Activated CD4-positive, alpha-beta memory T cell treated with anti-CD3 and anti-CD28 coated beads for 36 hours (primary cell): ENCODE measurements at regions of chr17 and their contacts with region 1.

Region 1: DNA sequence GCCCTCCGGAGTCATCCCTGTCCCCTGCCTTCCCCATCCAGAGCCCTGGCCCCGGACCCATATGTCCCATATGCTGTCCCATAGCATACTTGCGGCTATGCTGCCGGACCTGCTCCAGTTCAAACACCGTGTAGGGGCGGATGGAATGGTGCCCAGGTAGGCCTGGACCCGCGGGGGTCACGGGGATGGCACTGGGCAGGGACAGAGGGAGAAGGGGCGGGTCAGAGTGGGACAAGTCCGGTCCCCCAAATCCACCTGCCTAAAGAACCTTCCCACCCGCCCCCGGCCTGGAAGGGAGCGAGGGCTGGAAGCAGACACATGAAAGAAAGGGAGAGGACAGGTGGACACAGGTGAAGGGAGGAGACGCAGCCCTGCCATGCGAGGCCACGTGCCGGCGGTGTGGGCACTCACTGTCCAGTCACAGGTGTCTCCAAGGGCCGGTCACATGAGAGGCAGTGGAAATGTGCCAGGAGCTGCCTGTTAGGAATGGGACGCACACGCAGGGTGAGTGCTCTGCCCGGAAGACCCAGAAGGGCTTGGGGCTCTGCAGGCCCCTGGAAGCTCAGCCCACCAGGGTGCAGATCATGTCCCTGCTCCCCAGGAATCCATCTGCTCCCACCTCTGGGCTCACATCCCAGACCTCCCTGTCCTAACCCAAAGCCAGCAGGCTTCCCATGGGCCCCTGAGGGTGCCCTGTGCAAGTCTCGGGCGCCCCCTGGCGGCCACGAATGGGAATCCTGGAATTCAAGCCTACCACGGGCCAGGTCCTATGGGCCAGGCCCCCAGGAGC is 14.0 kb downstream of the UBALD2 start:
- DNase-seq: peak; percentile 90
- H3K4me3 Mint-ChIP-seq: no peak overlapping the region
- H3K27ac Mint-ChIP-seq: no peak overlapping the region
- H3K4me1 Mint-ChIP-seq: peaks cover 14% of the 10 kb centered on the region
- H3K27me3 Mint-ChIP-seq: no peaks in the 10 kb centered on the region

Region 2: GRCh38 chr17:75904749-75905521 is 374.2 kb before region 1 on chr17 and contains the start of gene MRPL38:
- CTCF ChIA-PET with region 1: interaction called, 7 read pairs
- POLR2A ChIA-PET with region 1: no interaction called
- intact Hi-C with region 1: loop called (anchors 10 kb)
- DNase-seq: peak; percentile 97
- H3K4me3 Mint-ChIP-seq: peak within 1 kb of the TSS; percentile 99
- H3K27ac Mint-ChIP-seq: peak within 1 kb of the TSS; percentile 90
- H3K4me1 Mint-ChIP-seq: peaks cover 17% of the 10 kb centered on the region
- H3K27me3 Mint-ChIP-seq: no peaks in the 10 kb centered on the region
- total RNA-seq, gene MRPL38: 108 TPM

Region 3: GRCh38 chr17:76121932-76122430 is 157.2 kb before region 1 on chr17:
- CTCF ChIA-PET with region 1: interaction called, 337 read pairs
- POLR2A ChIA-PET with region 1: interaction called, 14 read pairs
- intact Hi-C with region 1: loop called (anchors 1 kb)
- DNase-seq: peak; percentile 35
- H3K4me3 Mint-ChIP-seq: no peak overlapping the region
- H3K27ac Mint-ChIP-seq: no peak overlapping the region
- H3K4me1 Mint-ChIP-seq: peaks cover 9% of the 10 kb centered on the region
- H3K27me3 Mint-ChIP-seq: no peaks in the 10 kb centered on the region

Region 4: GRCh38 chr17:76153640-76154039 is 125.5 kb before region 1 on chr17:
- CTCF ChIA-PET with region 1: interaction called, 10 read pairs
- POLR2A ChIA-PET with region 1: no interaction called
- intact Hi-C with region 1: no loop called
- DNase-seq: no peak
- H3K4me3 Mint-ChIP-seq: no peak overlapping the region
- H3K27ac Mint-ChIP-seq: no peak overlapping the region
- H3K4me1 Mint-ChIP-seq: peaks cover 26% of the 10 kb centered on the region
- H3K27me3 Mint-ChIP-seq: no peaks in the 10 kb centered on the region

Region 5: GRCh38 chr17:76191896-76192295 is 87.3 kb before region 1 on chr17:
- CTCF ChIA-PET with region 1: interaction called, 12 read pairs
- POLR2A ChIA-PET with region 1: interaction called, 298 read pairs
- intact Hi-C with region 1: no loop called
- DNase-seq: peak; percentile 55
- H3K4me3 Mint-ChIP-seq: peak overlapping the region; percentile 61
- H3K27ac Mint-ChIP-seq: peak overlapping the region; percentile 97
- H3K4me1 Mint-ChIP-seq: peaks cover 59% of the 10 kb centered on the region
- H3K27me3 Mint-ChIP-seq: no peaks in the 10 kb centered on the region

Region 6: DNA sequence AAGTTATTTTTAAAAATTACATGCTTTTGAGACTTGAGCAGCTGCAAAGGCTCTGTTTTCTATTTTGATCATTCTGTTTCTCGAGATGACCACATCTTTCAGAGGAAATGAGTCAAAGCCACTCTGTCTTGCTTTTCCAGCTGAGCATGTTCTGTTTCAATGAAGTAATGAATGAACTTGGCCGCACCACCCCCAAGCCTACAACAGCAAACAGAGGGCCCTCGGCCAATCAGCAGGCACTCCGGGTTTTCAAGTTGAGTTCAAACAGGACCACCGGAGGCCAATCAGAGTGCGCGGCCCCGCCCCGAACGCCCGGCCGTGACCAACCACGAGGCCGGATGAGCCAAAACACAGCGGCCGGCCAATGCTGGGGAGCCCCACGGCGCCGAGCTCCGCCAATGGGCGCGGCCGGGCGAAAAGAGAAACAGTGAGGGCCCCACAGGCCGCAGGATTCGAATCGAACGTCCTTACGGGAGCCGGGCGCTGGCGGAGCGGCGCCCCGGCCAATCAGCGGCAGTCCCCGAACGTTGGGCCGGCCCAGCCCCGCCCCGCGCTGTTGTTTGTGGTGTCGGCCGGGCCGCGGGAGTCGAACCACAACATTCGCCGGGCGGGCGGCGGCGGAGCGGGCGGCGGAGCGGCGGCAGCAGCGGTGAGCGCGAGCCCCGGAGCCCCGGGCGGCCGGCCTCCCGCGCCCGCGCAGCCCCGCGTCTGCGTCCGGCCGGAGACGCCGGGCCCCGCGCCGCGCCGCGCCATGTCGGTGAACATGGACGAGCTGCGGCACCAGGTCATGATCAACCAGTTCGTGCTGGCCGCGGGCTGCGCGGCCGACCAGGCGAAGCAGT is 14.2 kb before region 1 on chr17 and contains the start of gene UBALD2:
- CTCF ChIA-PET with region 1: interaction called, 31 read pairs
- POLR2A ChIA-PET with region 1: interaction called, 47 read pairs
- intact Hi-C with region 1: no loop called
- DNase-seq: peak; percentile 100
- H3K4me3 Mint-ChIP-seq: peak within 1 kb of the TSS; percentile 92
- H3K27ac Mint-ChIP-seq: peak within 1 kb of the TSS; percentile 97
- H3K4me1 Mint-ChIP-seq: peaks cover 48% of the 10 kb centered on the region
- H3K27me3 Mint-ChIP-seq: no peaks in the 10 kb centered on the region
- total RNA-seq, gene UBALD2: 317 TPM

Region 7: DNA sequence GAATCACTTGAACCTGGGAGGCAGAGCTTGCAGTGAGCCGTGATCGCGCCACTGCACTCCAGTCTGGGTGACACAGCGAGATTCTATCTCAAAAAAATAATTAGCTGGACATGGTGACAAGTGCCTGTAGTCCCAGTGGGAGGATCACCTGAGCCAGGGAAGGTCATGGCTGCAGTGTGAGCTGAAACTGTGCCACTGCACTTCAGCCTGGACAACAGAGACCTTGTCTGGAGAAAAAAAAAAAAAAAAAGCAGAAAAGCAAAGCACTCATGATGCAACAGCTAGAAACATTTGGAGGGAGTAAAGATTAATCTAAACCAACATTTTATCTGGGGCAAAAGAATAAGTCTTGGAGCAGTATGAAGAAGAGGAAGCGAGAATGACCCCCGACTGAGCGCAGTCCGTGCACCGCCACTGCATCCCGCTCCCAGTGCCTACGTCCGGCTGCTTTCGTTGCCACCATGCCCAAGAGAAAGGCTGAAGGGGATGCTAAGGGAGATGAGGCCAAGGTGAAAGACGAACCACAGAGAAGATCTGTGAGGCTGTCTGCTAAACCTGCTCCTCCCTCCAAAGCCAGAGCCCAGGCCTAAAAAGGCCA is 66.3 kb after region 1 on chr17:
- CTCF ChIA-PET with region 1: no interaction called
- POLR2A ChIA-PET with region 1: no interaction called
- intact Hi-C with region 1: no loop called
- DNase-seq: no peak
- H3K4me3 Mint-ChIP-seq: no peak overlapping the region
- H3K27ac Mint-ChIP-seq: no peak overlapping the region
- H3K4me1 Mint-ChIP-seq: no peaks in the 10 kb centered on the region
- H3K27me3 Mint-ChIP-seq: no peaks in the 10 kb centered on the region

Region 8: GRCh38 chr17:76384222-76384986 is 105.3 kb after region 1 on chr17 and contains the start of gene SPHK1:
- CTCF ChIA-PET with region 1: interaction called, 10 read pairs
- POLR2A ChIA-PET with region 1: interaction called, 3 read pairs
- intact Hi-C with region 1: no loop called
- DNase-seq: peak; percentile 77
- H3K4me3 Mint-ChIP-seq: peak within 1 kb of the TSS; percentile 78
- H3K27ac Mint-ChIP-seq: peak within 1 kb of the TSS; percentile 85
- H3K4me1 Mint-ChIP-seq: peaks cover 8% of the 10 kb centered on the region
- H3K27me3 Mint-ChIP-seq: no peaks in the 10 kb centered on the region
- total RNA-seq, gene SPHK1: 9.9 to 11.4 TPM